ENCODE measurements at regions of chr9 and their contacts with region 1.

Region 1: GRCh38 chr9:127869310-127870152 is 7.9 kb downstream of the AK1 start:
- DNase-seq: peak; percentile 85
- ATAC-seq: peak; percentile 76
- H3K4me3 ChIP-seq: no peak overlapping the region
- H3K4me3 Mint-ChIP-seq: no peak overlapping the region
- H3K27ac ChIP-seq: no peak overlapping the region
- H3K27ac Mint-ChIP-seq: peak overlapping the region; percentile 53
- H3K4me1 ChIP-seq: peaks cover 16 to 29% of the 10 kb centered on the region in 2 donors
- H3K4me1 Mint-ChIP-seq: peaks cover 25% of the 10 kb centered on the region
- H3K27me3 ChIP-seq: no peaks in the 10 kb centered on the region
- H3K27me3 Mint-ChIP-seq: no peaks in the 10 kb centered on the region
- CTCF ChIP-seq: peak; percentile 92

Region 2: DNA sequence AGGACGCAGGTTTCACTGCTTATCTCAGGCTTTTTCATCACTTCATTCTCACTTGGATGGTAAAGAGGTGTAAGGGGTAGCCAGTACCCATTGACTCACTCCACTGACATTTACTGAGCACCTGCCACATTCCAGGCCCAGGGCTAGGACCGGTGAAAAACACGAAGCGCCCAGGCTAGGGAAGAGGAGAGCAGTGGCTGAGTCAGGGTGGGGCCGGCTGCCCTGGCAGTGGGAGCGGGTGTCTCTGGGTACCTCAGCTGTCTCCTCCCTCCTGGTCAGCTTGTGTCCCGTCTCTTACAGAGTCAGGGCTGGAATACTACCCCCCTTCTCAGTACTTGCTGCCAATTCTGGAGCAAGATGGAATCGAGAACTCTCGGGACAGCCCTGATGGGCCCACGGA is 396.0 kb before region 1 on chr9:
- CTCF ChIA-PET with region 1: no interaction called
- POLR2A ChIA-PET with region 1: no interaction called
- intact Hi-C with region 1: no loop called
- DNase-seq: peak; percentile 5
- ATAC-seq: no peak
- H3K4me3 ChIP-seq: no peak overlapping the region
- H3K4me3 Mint-ChIP-seq: no peak overlapping the region
- H3K27ac ChIP-seq: no peak overlapping the region
- H3K27ac Mint-ChIP-seq: no peak overlapping the region
- H3K4me1 ChIP-seq: no peaks in the 10 kb centered on the region
- H3K4me1 Mint-ChIP-seq: no peaks in the 10 kb centered on the region
- H3K27me3 ChIP-seq: no peaks in the 10 kb centered on the region
- H3K27me3 Mint-ChIP-seq: no peaks in the 10 kb centered on the region
- CTCF ChIP-seq: no peak

Region 3: GRCh38 chr9:127734747-127735529 is 134.6 kb before region 1 on chr9 and contains the start of gene TOR2A:
- CTCF ChIA-PET with region 1: interaction called, 109 read pairs
- POLR2A ChIA-PET with region 1: interaction called, 11 read pairs
- intact Hi-C with region 1: loop called (anchors 1 kb)
- DNase-seq: peak; percentile 99
- ATAC-seq: peak; percentile 92
- H3K4me3 ChIP-seq: peak within 1 kb of the TSS in 4 of 5 experiments; percentile 45 to 76 (median 64)
- H3K4me3 Mint-ChIP-seq: peak within 1 kb of the TSS; percentile 85
- H3K27ac ChIP-seq: peak within 1 kb of the TSS; percentile 80 to 96
- H3K27ac Mint-ChIP-seq: peak within 1 kb of the TSS; percentile 88
- H3K4me1 ChIP-seq: peaks cover 11 to 16% of the 10 kb centered on the region in 2 donors
- H3K4me1 Mint-ChIP-seq: peaks cover 16% of the 10 kb centered on the region
- H3K27me3 ChIP-seq: no peaks in the 10 kb centered on the region
- H3K27me3 Mint-ChIP-seq: no peaks in the 10 kb centered on the region
- CTCF ChIP-seq: peak; percentile 49
- total RNA-seq, gene TOR2A: 14.3 and 15.8 TPM in 2 replicates

Region 4: DNA sequence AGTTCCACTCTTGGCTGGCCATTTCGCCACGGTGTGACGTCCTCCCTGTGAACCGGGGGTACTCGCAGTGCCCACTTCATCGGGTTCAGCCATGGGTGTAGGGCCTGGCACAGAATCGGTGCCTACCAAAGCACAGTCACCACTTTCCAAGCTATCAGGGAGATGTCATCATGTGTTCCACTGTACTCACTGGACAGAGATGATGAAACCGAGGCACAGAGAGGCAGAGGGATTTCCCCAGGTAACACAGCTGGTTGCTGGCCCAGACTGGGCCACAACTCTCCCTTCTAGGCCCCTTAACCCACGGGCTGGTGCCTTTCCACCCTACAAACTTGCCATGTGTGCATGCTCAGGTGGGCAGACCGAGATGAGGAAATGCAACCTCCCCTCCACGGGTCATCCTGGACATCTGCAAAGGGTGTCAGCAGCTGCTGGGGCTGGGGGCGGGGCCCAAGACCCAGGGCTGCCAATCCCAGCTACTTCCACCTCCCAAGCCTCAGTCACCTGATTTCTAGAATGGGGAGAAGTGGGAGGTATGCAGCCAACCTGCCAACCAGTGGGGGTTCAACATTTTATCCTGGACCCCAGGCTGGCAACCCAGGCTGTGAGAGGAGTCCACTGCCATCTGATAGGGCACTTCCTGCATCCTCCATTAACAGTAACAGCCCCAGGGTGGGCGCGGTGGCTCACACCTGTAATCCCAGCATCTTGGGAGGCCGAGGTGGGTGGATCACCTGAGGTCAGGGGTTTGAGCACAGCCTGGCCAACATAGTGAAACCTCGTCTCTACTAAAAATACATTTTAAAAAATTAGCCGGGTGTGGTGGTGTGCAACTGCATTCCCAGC is 90.2 kb before region 1 on chr9:
- CTCF ChIA-PET with region 1: interaction called, 34 read pairs
- POLR2A ChIA-PET with region 1: interaction called, 4 read pairs
- intact Hi-C with region 1: no loop called
- DNase-seq: peak; percentile 80
- ATAC-seq: peak; percentile 50
- H3K4me3 ChIP-seq: peak overlapping the region; percentile 24 to 91 (median 69)
- H3K4me3 Mint-ChIP-seq: peak overlapping the region; percentile 100
- H3K27ac ChIP-seq: peak overlapping the region; percentile 89 to 97
- H3K27ac Mint-ChIP-seq: peak overlapping the region; percentile 97
- H3K4me1 ChIP-seq: peaks cover 43 to 82% of the 10 kb centered on the region in 2 donors
- H3K4me1 Mint-ChIP-seq: peaks cover 66% of the 10 kb centered on the region
- H3K27me3 ChIP-seq: no peaks in the 10 kb centered on the region
- H3K27me3 Mint-ChIP-seq: no peaks in the 10 kb centered on the region
- CTCF ChIP-seq: no peak

Region 5: GRCh38 chr9:127802576-127803443 is 66.7 kb before region 1 on chr9 and contains the start of gene FPGS:
- CTCF ChIA-PET with region 1: interaction called, 13 read pairs
- POLR2A ChIA-PET with region 1: interaction called, 7 read pairs
- intact Hi-C with region 1: loop called (anchors 2 kb)
- DNase-seq: peak; percentile 93
- ATAC-seq: peak; percentile 84
- H3K4me3 ChIP-seq: peak within 1 kb of the TSS; percentile 65 to 96 (median 88)
- H3K4me3 Mint-ChIP-seq: peak within 1 kb of the TSS; percentile 91
- H3K27ac ChIP-seq: peak within 1 kb of the TSS; percentile 68 to 90
- H3K27ac Mint-ChIP-seq: peak within 1 kb of the TSS; percentile 92
- H3K4me1 ChIP-seq: peaks cover 20 to 31% of the 10 kb centered on the region in 2 donors
- H3K4me1 Mint-ChIP-seq: peaks cover 33% of the 10 kb centered on the region
- H3K27me3 ChIP-seq: no peaks in the 10 kb centered on the region
- H3K27me3 Mint-ChIP-seq: no peaks in the 10 kb centered on the region
- CTCF ChIP-seq: no peak
- total RNA-seq, gene FPGS: 136 and 137 TPM in 2 replicates

Region 6: GRCh38 chr9:127893392-127893791 is 23.9 kb after region 1 on chr9:
- CTCF ChIA-PET with region 1: interaction called, 12 read pairs
- POLR2A ChIA-PET with region 1: interaction called, 4 read pairs
- intact Hi-C with region 1: no loop called
- DNase-seq: no peak
- ATAC-seq: no peak
- H3K4me3 ChIP-seq: no peak overlapping the region
- H3K4me3 Mint-ChIP-seq: no peak overlapping the region
- H3K27ac ChIP-seq: no peak overlapping the region
- H3K27ac Mint-ChIP-seq: peak overlapping the region; percentile 32
- H3K4me1 ChIP-seq: peaks cover 7 to 15% of the 10 kb centered on the region in 2 donors
- H3K4me1 Mint-ChIP-seq: peaks cover 23% of the 10 kb centered on the region
- H3K27me3 ChIP-seq: no peaks in the 10 kb centered on the region
- H3K27me3 Mint-ChIP-seq: no peaks in the 10 kb centered on the region
- CTCF ChIP-seq: no peak

Region 7: GRCh38 chr9:128034821-128035764 is 165.6 kb after region 1 on chr9:
- CTCF ChIA-PET with region 1: interaction called, 10 read pairs
- POLR2A ChIA-PET with region 1: no interaction called
- intact Hi-C with region 1: no loop called
- DNase-seq: peak; percentile 88
- ATAC-seq: peak; percentile 82
- H3K4me3 ChIP-seq: no peak overlapping the region
- H3K4me3 Mint-ChIP-seq: no peak overlapping the region
- H3K27ac ChIP-seq: no peak overlapping the region
- H3K27ac Mint-ChIP-seq: peak overlapping the region; percentile 71
- H3K4me1 ChIP-seq: peaks cover 29 to 46% of the 10 kb centered on the region in 2 donors
- H3K4me1 Mint-ChIP-seq: peaks cover 33% of the 10 kb centered on the region
- H3K27me3 ChIP-seq: no peaks in the 10 kb centered on the region
- H3K27me3 Mint-ChIP-seq: no peaks in the 10 kb centered on the region
- CTCF ChIP-seq: peak; percentile 93